ENCODE measurements at regions of chr11 and their contacts with region 1.

Region 1: DNA sequence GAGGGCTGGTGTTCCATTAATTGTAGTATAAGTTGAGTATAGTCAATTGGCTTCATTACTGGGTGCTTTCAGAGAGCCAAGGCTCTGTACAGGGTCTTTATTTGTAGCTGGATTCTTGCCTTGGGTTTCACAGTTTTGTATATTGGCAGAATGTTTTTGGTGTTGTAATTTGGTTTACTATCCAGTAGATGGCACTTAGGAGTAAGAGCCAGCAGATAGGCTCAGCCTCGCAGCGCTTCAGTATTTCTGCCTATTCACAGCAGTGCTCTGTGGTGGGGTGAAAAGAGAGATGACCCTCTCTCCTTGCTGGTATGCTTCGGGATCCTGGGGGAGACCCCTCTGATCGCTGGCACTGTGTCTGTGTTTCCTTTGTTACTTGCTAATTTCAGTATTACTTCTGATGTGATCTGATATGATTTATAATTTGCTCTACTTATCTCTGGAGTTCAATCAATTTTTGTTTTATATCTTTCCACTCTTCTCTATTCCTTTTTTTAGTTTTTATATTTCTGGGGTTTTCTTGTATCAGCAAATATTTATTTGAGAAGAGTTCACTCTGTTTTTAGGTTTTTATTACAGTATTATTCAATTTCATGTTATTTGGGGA is 52.2 kb downstream of the ANO5 start:
- DNase-seq: peak; percentile 36
- H3K4me3 ChIP-seq: no peak overlapping the region
- H3K27ac ChIP-seq: no peak overlapping the region
- H3K4me1 ChIP-seq: no peaks in the 10 kb centered on the region
- H3K27me3 ChIP-seq: no peaks in the 10 kb centered on the region
- CTCF ChIP-seq: peak; percentile 46 to 63
- POLR2A ChIP-seq: no peak

Region 2: DNA sequence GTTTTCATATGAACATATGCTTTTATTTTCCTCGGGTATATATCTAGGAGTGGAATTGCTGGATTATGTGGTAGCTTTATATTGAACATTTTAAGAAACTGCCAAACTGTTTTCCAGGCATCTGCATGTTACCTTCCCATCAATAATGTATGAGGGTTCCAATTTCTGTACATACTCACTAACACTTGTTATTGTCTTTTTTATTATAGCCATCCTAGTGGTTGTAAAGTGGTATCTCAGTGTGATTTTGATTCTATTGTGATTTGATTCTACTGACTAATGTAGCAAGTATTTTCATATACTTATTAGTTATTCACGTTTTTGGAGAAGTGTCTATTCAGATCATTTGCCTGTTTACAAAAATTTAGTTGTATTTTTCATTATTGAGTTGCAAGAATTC is 50.2 kb before region 1 on chr11:
- CTCF ChIA-PET with region 1: no interaction called
- POLR2A ChIA-PET with region 1: no interaction called
- dilution Hi-C with region 1: no loop called
- intact Hi-C with region 1: loop called (anchors 5 kb)
- DNase-seq: no peak
- H3K4me3 ChIP-seq: no peak overlapping the region
- H3K27ac ChIP-seq: no peak overlapping the region
- H3K4me1 ChIP-seq: peaks cover 6% of the 10 kb centered on the region
- H3K27me3 ChIP-seq: no peaks in the 10 kb centered on the region
- CTCF ChIP-seq: no peak
- POLR2A ChIP-seq: no peak

Region 3: GRCh38 chr11:22539821-22540256 is 294.8 kb after region 1 on chr11:
- CTCF ChIA-PET with region 1: interaction called, 17 read pairs
- POLR2A ChIA-PET with region 1: no interaction called
- dilution Hi-C with region 1: no loop called
- intact Hi-C with region 1: no loop called
- DNase-seq: peak; percentile 29
- H3K4me3 ChIP-seq: no peak overlapping the region
- H3K27ac ChIP-seq: no peak overlapping the region
- H3K4me1 ChIP-seq: no peaks in the 10 kb centered on the region
- H3K27me3 ChIP-seq: peaks cover 2% of the 10 kb centered on the region in 2 experiments
- CTCF ChIP-seq: peak; percentile 16 to 38
- POLR2A ChIP-seq: no peak

Measured in endothelial cell of umbilical vein (primary cell).